HCT116 (cell line): ENCODE measurements at regions of chrX and their contacts with region 1.

Region 1: DNA sequence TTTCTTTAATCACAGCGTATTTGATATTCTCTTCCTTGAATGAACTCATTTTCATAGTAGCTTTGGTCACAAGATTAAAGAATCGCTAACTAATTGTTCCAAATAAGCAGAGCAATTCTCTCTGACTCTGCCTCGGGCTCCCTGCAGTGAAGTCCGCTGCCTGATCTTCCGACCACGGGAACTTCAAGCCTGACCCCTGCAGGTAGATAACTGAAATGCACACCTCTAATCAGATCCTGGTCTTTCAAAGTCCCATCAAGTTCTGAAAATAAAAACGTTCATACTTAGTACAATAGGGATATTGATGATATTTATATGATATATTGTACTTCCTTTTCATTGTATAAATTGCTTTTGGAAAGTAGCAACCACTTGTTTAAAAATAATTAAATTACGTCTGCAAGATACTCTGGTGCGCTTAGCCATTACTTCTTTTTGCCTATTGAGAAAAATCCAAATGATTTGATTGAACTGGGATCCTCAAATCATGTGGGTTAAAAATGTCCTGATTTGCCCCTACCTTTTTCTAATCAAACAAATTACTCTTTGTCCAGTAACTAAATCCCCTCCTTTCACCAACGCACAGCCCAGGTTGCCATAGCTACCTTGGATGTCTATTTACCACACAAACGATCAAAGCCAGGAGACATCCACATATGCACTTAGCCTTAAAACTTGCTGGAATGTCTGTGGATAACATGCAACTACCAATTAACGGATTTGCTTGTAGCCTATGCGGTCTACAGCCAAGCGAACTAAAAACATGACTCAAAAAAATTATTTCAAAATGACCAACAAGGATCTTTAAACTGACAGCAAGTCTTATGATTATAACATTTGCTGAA is 4.2 kb downstream of the MID1 start:
- DNase-seq: no peak
- ATAC-seq: peak; percentile 33; the same call in 1 of the 2 replicates
- H3K4me3 ChIP-seq: peak overlapping the region; percentile 13 to 44; a peak in 2 of 4 replicates
- H3K27ac ChIP-seq: peak overlapping the region; percentile 85
- H3K4me1 ChIP-seq: peaks cover 36 to 68% of the 10 kb centered on the region in 2 experiments
- H3K27me3 ChIP-seq: no peaks in the 10 kb centered on the region
- CTCF ChIP-seq: peak in 2 of 3 experiments; percentile 56 to 62; a peak in 4 of 6 replicates
- POLR2A ChIP-seq: no peak
- RAD21 ChIP-seq: no peak

Region 2: GRCh38 chrX:10239611-10240064 is 376.5 kb before region 1 on chrX:
- CTCF ChIA-PET with region 1: no interaction called
- POLR2A ChIA-PET with region 1: no interaction called
- RAD21 ChIA-PET with region 1: no interaction called
- intact Hi-C with region 1: loop called (anchors 10 kb)
- DNase-seq: no peak
- ATAC-seq: peak; percentile 68
- H3K4me3 ChIP-seq: no peak overlapping the region
- H3K27ac ChIP-seq: peak overlapping the region; percentile 32; the same call in 1 of the 2 replicates
- H3K4me1 ChIP-seq: peaks cover 15 to 28% of the 10 kb centered on the region in 2 experiments
- H3K27me3 ChIP-seq: no peaks in the 10 kb centered on the region
- CTCF ChIP-seq: no peak
- POLR2A ChIP-seq: no peak
- RAD21 ChIP-seq: no peak